OCI-LY7 (cell line): ENCODE measurements at regions of chr4 and their contacts with region 1.

Region 1: GRCh38 chr4:10722957-10723356 is 38.4 kb upstream of the CLNK start:
- DNase-seq: peak; percentile 50
- H3K4me3 ChIP-seq: peak overlapping the region; percentile 21
- H3K27ac ChIP-seq: peak overlapping the region; percentile 13
- H3K4me1 ChIP-seq: peaks cover 47% of the 10 kb centered on the region
- CTCF ChIP-seq: no peak

Region 2: DNA sequence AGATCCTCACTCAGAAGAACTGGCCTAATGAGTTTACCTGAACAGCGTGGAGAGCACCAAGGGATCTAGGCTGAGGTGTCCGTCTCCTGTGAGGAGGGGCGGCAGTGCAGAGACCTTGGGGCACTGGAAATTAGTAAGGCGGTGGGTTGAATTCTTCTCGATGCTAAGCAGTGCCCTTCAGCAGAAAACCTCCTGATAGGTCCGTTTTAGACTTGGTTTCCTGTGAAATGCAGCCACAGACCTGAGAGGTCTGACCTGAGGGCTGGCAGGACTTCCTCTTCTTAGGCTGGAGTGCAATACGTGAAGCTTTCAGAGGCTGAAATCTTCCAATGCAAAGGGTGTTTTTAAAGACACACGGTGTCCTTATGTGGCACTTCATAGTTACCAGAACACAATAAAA is 38.3 kb before region 1 on chr4 and contains the start of gene CLNK:
- CTCF ChIA-PET with region 1: no interaction called
- POLR2A ChIA-PET with region 1: interaction called, 5 read pairs
- intact Hi-C with region 1: loop called (anchors 2 kb)
- DNase-seq: peak; percentile 41
- H3K4me3 ChIP-seq: no peak within 1 kb of the TSS
- H3K27ac ChIP-seq: no peak within 1 kb of the TSS
- H3K4me1 ChIP-seq: peaks cover 24% of the 10 kb centered on the region
- CTCF ChIP-seq: no peak
- total RNA-seq, gene CLNK: 0.05 TPM in 1 of 2 replicates, not detected in the other

Region 3: GRCh38 chr4:10811991-10812390 is 89.0 kb after region 1 on chr4:
- CTCF ChIA-PET with region 1: no interaction called
- POLR2A ChIA-PET with region 1: no interaction called
- intact Hi-C with region 1: no loop called
- DNase-seq: no peak
- H3K4me3 ChIP-seq: no peak overlapping the region
- H3K27ac ChIP-seq: no peak overlapping the region
- H3K4me1 ChIP-seq: no peaks in the 10 kb centered on the region
- CTCF ChIP-seq: no peak

Region 4: GRCh38 chr4:11106190-11106589 is 383.2 kb after region 1 on chr4:
- CTCF ChIA-PET with region 1: no interaction called
- POLR2A ChIA-PET with region 1: no interaction called
- intact Hi-C with region 1: loop called (anchors 10 kb)
- DNase-seq: no peak
- H3K4me3 ChIP-seq: no peak overlapping the region
- H3K27ac ChIP-seq: no peak overlapping the region
- H3K4me1 ChIP-seq: no peaks in the 10 kb centered on the region
- CTCF ChIP-seq: no peak

Region 5: DNA sequence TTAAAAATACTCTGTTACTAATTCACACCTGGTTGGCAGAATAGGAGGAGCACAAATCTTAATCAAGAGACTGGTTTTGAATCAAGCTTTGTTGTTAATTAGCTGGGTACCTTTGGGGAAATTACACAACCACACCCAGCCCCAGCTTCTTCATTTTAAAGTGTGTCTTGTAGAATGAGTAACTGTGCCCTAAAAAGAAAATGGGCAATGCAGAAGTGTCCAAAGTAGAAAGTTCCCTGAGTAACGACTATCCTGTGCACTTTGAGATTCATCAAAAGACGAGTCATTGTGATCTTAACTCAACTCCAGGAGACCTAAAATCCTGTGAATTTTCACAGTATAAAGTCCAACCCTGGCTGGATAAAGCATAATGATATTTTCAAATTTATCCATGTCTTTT is 1498.1 kb after region 1 on chr4:
- CTCF ChIA-PET with region 1: no interaction called
- POLR2A ChIA-PET with region 1: no interaction called
- intact Hi-C with region 1: no loop called
- DNase-seq: no peak
- H3K4me3 ChIP-seq: no peak overlapping the region
- H3K27ac ChIP-seq: no peak overlapping the region
- H3K4me1 ChIP-seq: no peaks in the 10 kb centered on the region
- CTCF ChIP-seq: no peak